ENCODE measurements at regions of chr6 and their contacts with region 1.

Region 1: GRCh38 chr6:99514089-99514488 is 1.1 kb downstream of the USP45 start:
- DNase-seq: no peak
- H3K4me3 ChIP-seq: peak overlapping the region; percentile 78 to 92 (median 82)
- H3K27ac ChIP-seq: no peak overlapping the region
- H3K4me1 ChIP-seq: peaks cover 2 to 5% (median 4%) of the 10 kb centered on the region in 4 experiments; a peak in 4 of 7 replicates
- H3K27me3 ChIP-seq: no peaks in the 10 kb centered on the region
- CTCF ChIP-seq: no peak
- EP300 ChIP-seq: no peak
- POLR2A ChIP-seq: no peak; a peak in 1 of 3 replicates
- RAD21 ChIP-seq: no peak

Region 2: DNA sequence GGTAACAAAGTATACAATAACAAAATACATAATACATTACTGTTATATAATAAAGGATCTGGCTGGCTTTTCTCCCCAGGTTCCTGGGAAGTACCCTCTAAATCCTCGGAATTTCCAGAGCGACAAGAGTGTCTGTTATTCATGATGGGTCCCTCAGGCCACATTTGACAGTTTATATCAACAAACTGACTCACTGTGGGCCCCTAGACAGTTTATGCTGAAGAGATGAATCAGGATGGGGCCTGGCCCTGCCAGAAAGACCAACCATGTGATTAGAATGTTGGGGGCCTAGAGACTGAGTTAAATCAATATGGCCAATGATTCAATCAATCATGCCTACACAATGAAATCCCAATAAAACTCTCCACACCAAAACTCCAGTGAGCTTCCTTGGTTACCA is 12.3 kb before region 1 on chr6:
- CTCF ChIA-PET with region 1: interaction called, 3 read pairs
- POLR2A ChIA-PET with region 1: interaction called, 12 read pairs
- DNase-seq: no peak
- H3K4me3 ChIP-seq: no peak overlapping the region
- H3K27ac ChIP-seq: no peak overlapping the region
- H3K4me1 ChIP-seq: no peaks in the 10 kb centered on the region
- H3K27me3 ChIP-seq: no peaks in the 10 kb centered on the region
- CTCF ChIP-seq: no peak
- EP300 ChIP-seq: no peak
- POLR2A ChIP-seq: no peak
- RAD21 ChIP-seq: no peak